Activated CD8-positive, alpha-beta T cell treated with anti-CD3 and anti-CD28 coated beads, Interleukin-2, amount 10 ng/mL, durations not matched to agents 7 days and 5 days (primary cell): ENCODE measurements at regions of chr13 and their contacts with region 1.

Region 1: GRCh38 chr13:41019011-41019487 is at the start of gene ELF1:
- DNase-seq: peak; percentile 78
- ATAC-seq: peak; percentile 91
- H3K4me3 Mint-ChIP-seq: peak within 1 kb of the TSS; percentile 89
- H3K27ac Mint-ChIP-seq: peak within 1 kb of the TSS; percentile 99
- H3K4me1 Mint-ChIP-seq: peaks cover 42% of the 10 kb centered on the region
- H3K27me3 Mint-ChIP-seq: no peaks in the 10 kb centered on the region
- total RNA-seq, gene ELF1: 106 to 107 TPM

Region 2: GRCh38 chr13:40181203-40181845 is 837.7 kb before region 1 on chr13:
- CTCF ChIA-PET with region 1: no interaction called
- POLR2A ChIA-PET with region 1: no interaction called
- DNase-seq: no peak
- ATAC-seq: no peak
- H3K4me3 Mint-ChIP-seq: no peak overlapping the region
- H3K27ac Mint-ChIP-seq: peak overlapping the region; percentile 7
- H3K4me1 Mint-ChIP-seq: peaks cover 56% of the 10 kb centered on the region
- H3K27me3 Mint-ChIP-seq: no peaks in the 10 kb centered on the region

Region 3: DNA sequence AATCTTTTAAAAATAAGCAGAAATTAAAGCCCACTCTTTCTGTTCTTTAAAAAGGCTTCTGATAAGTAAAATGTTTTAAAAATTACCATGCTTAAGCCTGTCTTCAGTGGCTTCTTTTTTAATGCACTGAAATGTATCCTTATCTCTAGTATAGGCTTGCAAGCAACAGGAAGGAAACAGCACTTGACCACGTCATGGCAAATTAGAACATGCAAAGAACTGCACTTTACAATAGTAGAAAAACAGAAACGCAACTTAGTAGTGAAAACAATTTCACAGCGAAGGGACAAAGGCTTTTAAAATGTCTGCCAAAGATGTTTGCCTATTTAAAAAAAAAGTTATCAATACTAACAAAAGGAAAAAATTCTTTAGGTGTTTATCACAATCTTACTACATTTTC is 36.3 kb before region 1 on chr13:
- CTCF ChIA-PET with region 1: interaction called, 10 read pairs
- POLR2A ChIA-PET with region 1: interaction called, 40 read pairs
- DNase-seq: peak; percentile 82
- ATAC-seq: peak; percentile 62
- H3K4me3 Mint-ChIP-seq: peak overlapping the region; percentile 94
- H3K27ac Mint-ChIP-seq: peak overlapping the region; percentile 93
- H3K4me1 Mint-ChIP-seq: peaks cover 53% of the 10 kb centered on the region
- H3K27me3 Mint-ChIP-seq: no peaks in the 10 kb centered on the region

Region 4: DNA sequence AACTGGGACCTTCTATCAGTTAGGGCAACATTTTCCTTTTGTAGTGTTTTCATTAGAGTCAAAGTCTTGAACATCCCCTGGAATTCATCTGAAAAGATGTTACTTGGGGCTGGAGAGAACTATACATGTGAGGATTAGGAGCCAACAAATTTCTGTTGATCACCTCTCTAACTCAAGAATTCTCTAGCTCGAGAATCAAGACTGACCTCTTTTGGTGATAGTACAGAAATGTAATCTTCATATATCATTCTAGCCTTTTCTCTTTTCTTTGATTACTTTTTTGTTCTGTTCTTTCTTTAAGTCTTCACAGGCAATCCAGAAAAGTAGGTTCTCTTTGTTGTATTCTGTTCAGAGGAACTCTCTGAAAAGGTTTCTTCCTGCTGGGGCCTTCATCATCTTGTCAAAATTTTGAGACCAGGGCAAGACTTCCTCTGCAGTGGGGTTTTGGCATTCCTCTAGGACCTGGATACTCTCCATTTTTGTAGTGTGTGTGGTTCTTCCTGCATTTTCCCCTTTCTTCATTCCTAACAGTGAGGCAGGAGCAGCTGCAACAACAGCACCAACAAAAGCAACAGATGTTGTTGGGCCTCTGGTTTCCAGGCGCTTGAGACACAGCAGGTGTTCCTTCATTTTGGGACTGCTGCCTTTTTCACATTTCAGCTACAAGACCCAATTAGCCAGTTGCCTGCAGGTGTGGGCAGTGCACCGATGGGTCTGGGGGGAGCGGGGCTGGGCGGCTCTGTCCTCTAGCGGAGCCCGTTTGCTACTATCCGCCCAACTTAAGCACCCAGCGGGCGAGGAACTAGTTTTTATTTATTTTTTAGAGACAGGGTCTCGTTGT is 26.2 kb before region 1 on chr13:
- CTCF ChIA-PET with region 1: interaction called, 4 read pairs
- POLR2A ChIA-PET with region 1: interaction called, 10 read pairs
- DNase-seq: no peak
- ATAC-seq: no peak
- H3K4me3 Mint-ChIP-seq: peak overlapping the region; percentile 8
- H3K27ac Mint-ChIP-seq: peak overlapping the region; percentile 87
- H3K4me1 Mint-ChIP-seq: peaks cover 78% of the 10 kb centered on the region
- H3K27me3 Mint-ChIP-seq: no peaks in the 10 kb centered on the region

Region 5: GRCh38 chr13:41004875-41005693 is 14.0 kb before region 1 on chr13:
- CTCF ChIA-PET with region 1: interaction called, 16 read pairs
- POLR2A ChIA-PET with region 1: interaction called, 49 read pairs
- DNase-seq: peak; percentile 61
- ATAC-seq: peak; percentile 85
- H3K4me3 Mint-ChIP-seq: peak overlapping the region; percentile 54
- H3K27ac Mint-ChIP-seq: peak overlapping the region; percentile 87
- H3K4me1 Mint-ChIP-seq: peaks cover 68% of the 10 kb centered on the region
- H3K27me3 Mint-ChIP-seq: no peaks in the 10 kb centered on the region

Region 6: DNA sequence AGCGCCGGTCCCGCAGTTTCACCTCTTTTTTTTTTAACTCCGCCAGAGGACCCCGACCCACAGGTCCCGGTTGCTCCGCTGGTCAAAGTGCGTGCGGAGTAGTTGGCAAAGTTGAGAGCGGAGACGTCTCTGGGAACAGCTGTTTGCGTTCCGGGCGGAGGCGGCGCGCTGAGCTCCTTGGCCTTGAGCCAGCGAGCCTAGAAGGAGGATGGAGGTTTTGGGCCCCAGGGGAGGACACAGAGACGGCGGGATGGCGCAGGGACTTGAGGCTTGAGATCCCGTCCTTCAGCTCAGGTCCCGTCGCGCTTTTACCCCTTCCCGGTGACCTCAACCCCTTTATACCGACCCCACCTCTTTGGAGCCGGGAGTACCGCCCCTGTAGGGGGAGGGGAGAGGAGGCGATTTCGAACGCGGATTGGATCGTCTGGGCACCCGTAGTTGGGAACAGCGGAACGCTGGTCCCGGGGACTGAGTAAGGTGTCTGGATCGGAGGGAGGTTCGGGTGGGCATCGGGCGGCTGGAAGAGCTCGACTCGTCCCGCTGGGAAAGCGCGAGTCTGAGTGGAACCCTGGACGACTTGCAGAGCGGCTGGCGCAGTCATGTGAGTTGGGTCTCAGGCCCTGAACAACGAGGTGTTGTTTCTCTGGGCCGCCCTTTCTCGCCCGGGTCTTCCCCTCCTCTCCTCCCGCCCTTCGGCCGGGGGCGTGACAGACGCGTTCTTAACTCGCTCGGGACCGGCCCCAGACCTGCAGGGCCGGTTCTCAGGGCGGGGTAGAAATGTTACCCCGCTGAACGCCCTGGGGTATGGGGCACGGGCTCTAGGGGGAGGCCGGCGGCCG is 42.2 kb after region 1 on chr13 and contains the start of gene WBP4:
- CTCF ChIA-PET with region 1: interaction called, 5 read pairs
- POLR2A ChIA-PET with region 1: interaction called, 19 read pairs
- DNase-seq: peak; percentile 92
- ATAC-seq: peak; percentile 74
- H3K4me3 Mint-ChIP-seq: peak within 1 kb of the TSS; percentile 99
- H3K27ac Mint-ChIP-seq: peak within 1 kb of the TSS; percentile 99
- H3K4me1 Mint-ChIP-seq: peaks cover 47% of the 10 kb centered on the region
- H3K27me3 Mint-ChIP-seq: no peaks in the 10 kb centered on the region
- total RNA-seq, gene WBP4: 9.7 to 10.4 TPM